Dorsolateral prefrontal cortex (tissue), 120 donors: ENCODE measurements at regions of chr3 and their contacts with region 1.

Region 1: DNA sequence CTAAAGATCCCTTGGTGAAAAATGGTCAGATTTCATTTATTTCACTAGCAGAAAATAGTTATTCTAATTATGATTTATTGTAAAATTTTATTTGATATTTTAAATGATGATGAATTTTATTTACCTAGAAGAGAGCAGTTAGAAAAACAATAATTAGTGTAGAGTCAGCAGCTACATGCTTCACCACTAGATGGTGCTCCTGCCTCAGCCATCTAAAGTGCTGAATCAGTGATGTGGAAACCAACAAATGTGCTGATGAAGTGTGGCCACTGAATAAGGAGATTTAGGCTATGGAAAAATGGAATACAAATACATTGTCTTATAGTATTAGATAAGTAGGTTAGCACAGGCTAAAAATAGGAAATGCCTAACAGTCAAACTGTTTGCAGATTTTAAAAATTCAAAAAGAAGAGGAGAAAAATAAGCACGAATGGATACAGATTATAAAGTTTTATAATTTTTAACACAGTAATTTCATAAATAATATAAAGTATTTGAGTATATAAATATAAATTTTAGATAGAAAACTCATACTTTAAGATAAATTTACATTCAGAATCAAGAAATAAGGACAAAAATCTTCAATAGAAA is 109.8 kb downstream of the PPP2R3A start:
- DNase-seq: peak; percentile 42 to 88 (median 65)
- H3K4me3 ChIP-seq: no peak overlapping the region
- H3K27ac ChIP-seq: peak overlapping the region in 6 of 59 donors; percentile 10 to 51 (median 23)
- H3K27me3 ChIP-seq: no peaks in the 10 kb centered on the region
- CTCF ChIP-seq: peak; percentile 85 to 99 (median 95)

Region 2: GRCh38 chr3:136177876-136178275 is 102.6 kb after region 1 on chr3:
- intact Hi-C with region 1: no loop called
- DNase-seq: no peak
- H3K4me3 ChIP-seq: no peak overlapping the region
- H3K27ac ChIP-seq: no peak overlapping the region
- H3K27me3 ChIP-seq: no peaks in the 10 kb centered on the region
- CTCF ChIP-seq: no peak

Region 3: DNA sequence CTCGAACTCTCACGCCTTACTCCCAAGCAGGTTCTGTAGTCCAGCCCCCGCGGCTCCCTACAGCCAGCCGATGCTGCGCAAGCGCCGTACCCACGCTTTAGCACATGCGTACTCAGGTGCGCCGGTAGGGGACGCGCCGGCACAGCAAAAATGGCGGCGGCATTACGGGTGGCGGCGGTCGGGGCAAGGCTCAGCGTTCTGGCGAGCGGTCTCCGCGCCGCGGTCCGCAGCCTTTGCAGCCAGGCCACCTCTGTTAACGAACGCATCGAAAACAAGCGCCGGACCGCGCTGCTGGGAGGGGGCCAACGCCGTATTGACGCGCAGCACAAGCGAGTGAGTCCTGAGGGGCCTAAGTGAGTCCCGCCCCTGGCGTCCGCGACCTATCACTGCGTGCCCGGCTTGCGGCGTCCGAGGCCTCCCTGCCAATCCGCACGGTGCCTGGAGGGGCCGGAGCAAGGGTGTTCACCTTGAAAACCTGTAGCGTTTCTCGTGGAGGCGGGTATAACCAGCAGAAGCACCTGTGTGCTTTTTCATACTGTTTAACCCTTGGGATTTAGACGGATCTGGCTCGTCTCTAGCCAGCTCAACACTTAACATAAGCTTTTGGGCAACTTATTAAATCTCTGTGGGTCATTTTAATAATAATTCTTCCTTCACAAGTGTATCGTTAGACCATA is 175.1 kb after region 1 on chr3 and contains the start of gene PCCB:
- intact Hi-C with region 1: loop called (anchors 2 kb)
- DNase-seq: peak; percentile 84 to 94 (median 90)
- H3K4me3 ChIP-seq: peak within 1 kb of the TSS; percentile 42 to 93 (median 81)
- H3K27ac ChIP-seq: peak within 1 kb of the TSS; percentile 72 to 99 (median 95)
- H3K27me3 ChIP-seq: no peaks in the 10 kb centered on the region
- CTCF ChIP-seq: peak; percentile 58 to 94 (median 82)
- total RNA-seq, gene PCCB: 37.3 to 110 (median 59.5) TPM

Region 4: GRCh38 chr3:136390574-136390973 is 315.3 kb after region 1 on chr3:
- intact Hi-C with region 1: loop called (anchors 5 to 10 kb)
- DNase-seq: no peak
- H3K4me3 ChIP-seq: no peak overlapping the region
- H3K27ac ChIP-seq: no peak overlapping the region
- H3K27me3 ChIP-seq: no peaks in the 10 kb centered on the region
- CTCF ChIP-seq: no peak

Region 5: GRCh38 chr3:136861890-136862616 is 786.7 kb after region 1 on chr3 and contains the start of gene NCK1:
- intact Hi-C with region 1: loop called in 1 of 2 experiments (anchors 5 kb)
- DNase-seq: peak; percentile 99 to 100 (median 99)
- H3K4me3 ChIP-seq: peak within 1 kb of the TSS; percentile 66 to 98 (median 92)
- H3K27ac ChIP-seq: peak within 1 kb of the TSS in 58 of 59 donors; percentile 54 to 95 (median 88)
- H3K27me3 ChIP-seq: no peaks in the 10 kb centered on the region
- CTCF ChIP-seq: peak in 35 of 56 donors; percentile 4 to 58 (median 28)
- total RNA-seq, gene NCK1: 15.6 to 40.2 (median 26.0) TPM

Region 6: DNA sequence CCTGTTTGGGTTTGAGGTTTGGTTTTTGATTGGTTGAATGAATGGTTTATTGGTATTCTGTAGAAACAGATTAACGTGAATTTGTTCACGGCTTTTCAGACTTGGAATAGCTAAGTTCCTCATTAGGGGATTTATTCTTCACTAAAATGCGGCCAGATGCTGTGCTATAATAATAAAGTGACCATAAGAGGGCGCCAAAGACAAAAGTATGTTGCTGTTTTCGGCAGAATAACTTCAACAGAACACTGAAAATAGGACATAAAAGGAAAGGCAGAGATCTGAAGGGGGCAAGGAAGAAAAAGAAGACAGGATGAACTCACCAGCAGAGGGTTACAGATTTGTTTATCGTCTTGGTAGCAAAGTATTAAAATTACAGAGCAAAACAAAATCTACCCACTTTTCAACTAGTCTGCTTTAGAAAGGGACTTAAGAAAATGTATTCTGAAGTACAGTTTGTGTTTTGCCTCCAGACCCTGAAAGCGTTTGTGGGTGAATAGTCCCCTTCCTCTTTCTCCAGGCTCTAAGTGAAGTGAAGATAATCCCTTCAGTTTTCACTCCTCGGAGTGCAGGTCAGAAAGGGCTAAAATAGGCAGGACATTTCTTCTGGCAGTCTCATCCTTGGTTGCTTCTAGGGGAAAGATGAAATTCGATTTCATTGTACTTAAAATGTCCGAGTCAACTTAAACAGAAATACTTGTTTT is 1030.1 kb after region 1 on chr3:
- intact Hi-C with region 1: loop called in 1 of 2 experiments (anchors 10 kb)
- DNase-seq: peak in 3 of 10 donors; percentile 23 to 33 (median 30)
- H3K4me3 ChIP-seq: peak overlapping the region in 9 of 59 donors; percentile 0 to 23 (median 7)
- H3K27ac ChIP-seq: no peak overlapping the region
- H3K27me3 ChIP-seq: peaks cover 0 to 46% (median 19%) of the 10 kb centered on the region in 45 donors
- CTCF ChIP-seq: peak; percentile 66 to 93 (median 78)